Activated naive CD4-positive, alpha-beta T cell treated with anti-CD3 and anti-CD28 coated beads for 36 hours (primary cell): ENCODE measurements at regions of chr12 and their contacts with region 1.

Region 1: DNA sequence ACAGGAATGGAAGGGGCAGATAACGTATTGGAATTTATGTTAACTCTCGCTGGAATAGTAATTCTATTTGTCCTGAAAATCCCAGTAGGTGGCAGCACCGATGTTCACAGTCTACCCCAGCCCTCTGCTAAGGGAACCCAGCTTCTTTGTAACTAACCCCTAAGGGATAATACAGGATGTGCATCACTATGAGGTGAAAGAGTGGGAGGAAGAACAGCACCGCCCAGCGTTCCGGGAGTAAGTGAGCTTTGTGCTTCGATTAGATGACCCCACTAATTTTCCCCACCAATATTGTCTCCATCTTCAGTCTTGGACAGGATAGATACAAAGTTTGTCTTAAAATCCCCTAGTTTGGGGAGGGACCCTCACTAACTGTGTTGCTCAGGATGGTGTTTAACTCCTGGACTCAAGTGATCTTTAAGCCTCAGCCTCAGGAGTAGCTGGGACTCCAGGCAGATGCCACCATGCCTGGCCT is 2.7 kb downstream of the SLC2A3 start:
- DNase-seq: peak; percentile 85
- H3K4me3 Mint-ChIP-seq: no peak overlapping the region
- H3K27ac Mint-ChIP-seq: no peak overlapping the region
- H3K4me1 Mint-ChIP-seq: peaks cover 38% of the 10 kb centered on the region
- H3K27me3 Mint-ChIP-seq: no peaks in the 10 kb centered on the region

Region 2: DNA sequence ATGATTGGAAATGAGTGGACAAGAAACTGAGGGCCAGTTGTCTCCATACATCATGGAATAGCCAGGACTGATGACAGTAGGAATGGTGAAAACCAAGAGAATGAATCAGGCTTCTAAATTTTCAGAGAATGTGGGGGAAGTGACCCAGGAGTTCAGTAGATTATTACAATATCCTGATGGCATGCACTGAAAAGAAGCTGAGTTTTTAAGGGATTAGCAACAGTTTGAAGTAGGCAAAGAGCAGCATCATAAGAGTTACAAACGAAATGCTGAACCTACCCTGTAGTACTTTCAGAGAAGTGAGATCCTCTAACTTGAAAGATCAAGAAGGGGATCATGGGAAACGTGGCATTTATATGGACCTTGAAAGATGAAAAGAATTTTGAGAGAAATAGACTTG is 73.7 kb before region 1 on chr12:
- CTCF ChIA-PET with region 1: interaction called, 13 read pairs
- intact Hi-C with region 1: loop called (anchors 1 kb)
- DNase-seq: no peak
- H3K4me3 Mint-ChIP-seq: no peak overlapping the region
- H3K27ac Mint-ChIP-seq: no peak overlapping the region
- H3K4me1 Mint-ChIP-seq: peaks cover 11% of the 10 kb centered on the region
- H3K27me3 Mint-ChIP-seq: no peaks in the 10 kb centered on the region

Region 3: GRCh38 chr12:7892186-7892980 is 40.9 kb before region 1 on chr12:
- CTCF ChIA-PET with region 1: no interaction called
- intact Hi-C with region 1: no loop called
- DNase-seq: no peak
- H3K4me3 Mint-ChIP-seq: no peak overlapping the region
- H3K27ac Mint-ChIP-seq: no peak overlapping the region
- H3K4me1 Mint-ChIP-seq: no peaks in the 10 kb centered on the region
- H3K27me3 Mint-ChIP-seq: no peaks in the 10 kb centered on the region

Region 4: DNA sequence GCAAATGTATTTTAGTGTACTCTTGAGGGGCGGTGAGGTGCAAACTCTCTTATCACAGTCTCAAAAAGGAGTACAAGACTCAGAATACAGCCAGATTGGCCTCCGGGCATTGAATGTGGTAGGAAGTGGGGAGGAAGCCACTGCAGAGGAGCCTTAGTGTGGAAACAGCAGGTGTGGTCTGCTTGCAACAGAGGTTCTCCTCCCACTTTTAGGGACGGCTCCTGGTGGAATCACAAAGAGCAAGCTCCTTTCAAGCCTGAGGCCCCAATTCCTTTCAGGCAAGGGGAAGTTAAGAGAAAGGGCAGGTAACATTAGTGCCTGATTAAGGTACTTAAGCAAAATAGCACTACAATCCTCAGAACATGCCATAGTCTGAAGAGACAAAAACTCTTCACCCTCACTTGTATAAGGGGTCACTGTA is 26.4 kb after region 1 on chr12:
- CTCF ChIA-PET with region 1: interaction called, 114 read pairs
- intact Hi-C with region 1: loop called (anchors 1 kb)
- DNase-seq: peak; percentile 68
- H3K4me3 Mint-ChIP-seq: peak overlapping the region; percentile 86
- H3K27ac Mint-ChIP-seq: peak overlapping the region; percentile 93
- H3K4me1 Mint-ChIP-seq: peaks cover 37% of the 10 kb centered on the region
- H3K27me3 Mint-ChIP-seq: no peaks in the 10 kb centered on the region

Region 5: GRCh38 chr12:7970475-7971252 is 37.4 kb after region 1 on chr12:
- CTCF ChIA-PET with region 1: interaction called, 46 read pairs
- intact Hi-C with region 1: loop called (anchors 1 kb)
- DNase-seq: peak; percentile 92
- H3K4me3 Mint-ChIP-seq: peak overlapping the region; percentile 79
- H3K27ac Mint-ChIP-seq: peak overlapping the region; percentile 97
- H3K4me1 Mint-ChIP-seq: peaks cover 32% of the 10 kb centered on the region
- H3K27me3 Mint-ChIP-seq: no peaks in the 10 kb centered on the region

Region 6: GRCh38 chr12:7989827-7990551 is 56.7 kb after region 1 on chr12:
- CTCF ChIA-PET with region 1: interaction called, 36 read pairs
- intact Hi-C with region 1: loop called (anchors 1 kb)
- DNase-seq: peak; percentile 84
- H3K4me3 Mint-ChIP-seq: peak overlapping the region; percentile 41
- H3K27ac Mint-ChIP-seq: peak overlapping the region; percentile 82
- H3K4me1 Mint-ChIP-seq: peaks cover 26% of the 10 kb centered on the region
- H3K27me3 Mint-ChIP-seq: no peaks in the 10 kb centered on the region

Region 7: GRCh38 chr12:7995266-7995963 is 62.1 kb after region 1 on chr12:
- CTCF ChIA-PET with region 1: interaction called, 36 read pairs
- intact Hi-C with region 1: loop called (anchors 1 kb)
- DNase-seq: peak; percentile 95
- H3K4me3 Mint-ChIP-seq: no peak overlapping the region
- H3K27ac Mint-ChIP-seq: no peak overlapping the region
- H3K4me1 Mint-ChIP-seq: peaks cover 13% of the 10 kb centered on the region
- H3K27me3 Mint-ChIP-seq: no peaks in the 10 kb centered on the region

Region 8: GRCh38 chr12:8026291-8026900 is 93.1 kb after region 1 on chr12:
- CTCF ChIA-PET with region 1: no interaction called
- intact Hi-C with region 1: loop called (anchors 1 kb)
- DNase-seq: peak; percentile 99
- H3K4me3 Mint-ChIP-seq: peak overlapping the region; percentile 94
- H3K27ac Mint-ChIP-seq: peak overlapping the region; percentile 100
- H3K4me1 Mint-ChIP-seq: peaks cover 11% of the 10 kb centered on the region
- H3K27me3 Mint-ChIP-seq: no peaks in the 10 kb centered on the region